PC-3 (cell line): ENCODE measurements at regions of chr15 and their contacts with region 1.

Region 1: DNA sequence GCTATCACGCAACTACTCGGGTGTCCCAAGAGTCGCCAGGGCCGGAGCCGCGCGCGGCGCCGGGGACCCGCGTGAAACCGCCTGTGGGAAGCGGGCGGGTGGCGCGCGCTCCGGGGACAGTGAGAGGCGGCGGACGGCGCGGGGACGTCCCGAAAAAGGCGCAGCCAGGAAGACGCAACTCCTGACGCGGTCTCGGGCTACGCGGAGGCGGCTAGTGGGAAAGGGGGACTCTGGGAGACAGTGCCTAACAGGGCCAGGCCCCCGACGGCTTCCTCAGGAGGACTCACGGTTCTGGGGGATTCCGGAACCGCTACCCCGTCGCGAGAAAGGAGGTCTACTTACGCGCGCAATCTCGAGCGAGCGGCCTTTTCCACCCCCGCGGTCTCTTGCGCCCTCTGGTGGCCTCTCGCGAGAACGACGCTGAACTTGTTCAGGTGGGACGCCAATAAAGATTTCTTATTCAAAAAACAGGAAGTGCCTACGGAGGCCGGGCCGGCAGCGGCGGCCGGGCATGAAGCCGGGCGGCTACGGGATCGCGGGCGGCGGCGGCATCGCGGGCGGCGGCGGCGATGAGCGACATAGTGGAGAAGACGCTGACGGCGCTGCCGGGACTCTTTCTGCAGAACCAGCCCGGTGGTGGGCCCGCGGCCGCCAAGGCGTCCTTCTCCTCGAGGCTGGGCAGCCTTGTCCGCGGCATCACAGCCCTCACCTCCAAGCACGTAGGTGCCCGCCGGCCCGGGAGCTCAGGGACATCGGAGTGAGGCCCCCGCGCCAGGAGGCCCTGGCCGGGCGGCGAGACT is at the start of gene AP4E1:
- DNase-seq: peak; percentile 88
- ATAC-seq: peak; percentile 60
- H3K4me3 ChIP-seq: peak within 1 kb of the TSS; percentile 94
- H3K27ac ChIP-seq: no peak within 1 kb of the TSS
- H3K4me1 ChIP-seq: peaks cover 7% of the 10 kb centered on the region; the same call in 1 of the 2 replicates
- H3K27me3 ChIP-seq: no peaks in the 10 kb centered on the region
- CTCF ChIP-seq: peak; percentile 80
- total RNA-seq, gene AP4E1: 4.7 and 6.0 TPM in 2 replicates

Region 2: DNA sequence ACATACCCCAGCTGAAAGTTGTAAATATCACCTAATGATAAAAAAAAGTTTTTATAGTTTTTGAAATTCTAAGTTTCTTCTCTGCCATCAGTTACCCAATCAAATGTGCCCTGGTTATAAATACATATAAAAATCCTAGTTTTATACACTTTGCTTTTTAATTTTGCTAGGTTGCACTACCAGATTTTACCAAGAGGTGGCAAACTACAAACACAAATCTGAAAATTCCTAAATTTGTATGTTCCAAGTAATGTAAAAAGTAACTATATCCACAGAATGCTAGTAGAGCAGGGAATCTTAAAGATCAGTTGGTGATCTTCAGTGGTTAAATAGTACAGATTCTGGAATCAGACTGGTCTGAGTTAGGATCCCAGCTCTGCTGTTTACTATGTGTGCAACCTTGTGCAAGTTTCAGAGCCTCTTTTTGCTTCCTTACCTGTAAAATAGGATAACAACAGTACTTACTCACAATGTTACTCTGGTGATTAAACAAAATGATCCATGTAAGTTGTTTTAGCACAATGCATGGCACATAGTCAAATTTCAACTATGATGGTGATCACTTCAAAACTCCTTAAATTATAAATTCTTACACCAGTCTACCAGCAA is 232.8 kb before region 1 on chr15:
- CTCF ChIA-PET with region 1: no interaction called
- POLR2A ChIA-PET with region 1: interaction called, 3 read pairs
- intact Hi-C with region 1: loop called (anchors 1 kb)
- DNase-seq: peak; percentile 65
- ATAC-seq: peak; percentile 43; the same call in 1 of the 2 replicates
- H3K4me3 ChIP-seq: no peak overlapping the region
- H3K27ac ChIP-seq: no peak overlapping the region
- H3K4me1 ChIP-seq: no peaks in the 10 kb centered on the region
- H3K27me3 ChIP-seq: no peaks in the 10 kb centered on the region
- CTCF ChIP-seq: peak; percentile 75

Region 3: DNA sequence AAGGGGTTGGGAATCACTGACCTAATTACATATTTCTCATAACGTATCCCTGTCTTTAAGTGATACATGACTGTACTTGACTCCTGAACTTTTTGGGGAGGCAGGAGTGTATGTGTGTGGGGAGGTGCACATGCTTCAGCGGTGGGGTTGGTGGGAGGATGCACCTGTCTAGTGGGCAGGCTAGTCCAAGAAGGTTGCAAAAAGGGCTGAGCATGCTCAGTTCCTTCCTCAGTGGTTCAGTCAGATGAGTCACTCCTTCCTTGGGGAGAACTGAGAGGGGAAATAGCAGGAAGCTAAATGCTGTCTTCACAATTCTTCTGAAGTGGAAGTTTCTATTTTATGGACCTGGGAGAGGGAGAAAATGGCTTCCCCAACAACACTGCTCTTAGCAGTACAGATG is 24.5 kb before region 1 on chr15:
- CTCF ChIA-PET with region 1: no interaction called
- POLR2A ChIA-PET with region 1: interaction called, 7 read pairs
- intact Hi-C with region 1: loop called (anchors 2 kb)
- DNase-seq: peak; percentile 61
- ATAC-seq: no peak
- H3K4me3 ChIP-seq: peak overlapping the region; percentile 51; the same call in 1 of the 2 replicates
- H3K27ac ChIP-seq: peak overlapping the region; percentile 99
- H3K4me1 ChIP-seq: peaks cover 31% of the 10 kb centered on the region
- H3K27me3 ChIP-seq: no peaks in the 10 kb centered on the region
- CTCF ChIP-seq: no peak

Region 4: GRCh38 chr15:50964075-50964474 is 55.7 kb after region 1 on chr15:
- CTCF ChIA-PET with region 1: no interaction called
- POLR2A ChIA-PET with region 1: no interaction called
- intact Hi-C with region 1: no loop called
- DNase-seq: no peak
- ATAC-seq: no peak
- H3K4me3 ChIP-seq: no peak overlapping the region
- H3K27ac ChIP-seq: no peak overlapping the region
- H3K4me1 ChIP-seq: no peaks in the 10 kb centered on the region; the same call in 1 of the 2 replicates
- H3K27me3 ChIP-seq: no peaks in the 10 kb centered on the region
- CTCF ChIP-seq: no peak

Region 5: DNA sequence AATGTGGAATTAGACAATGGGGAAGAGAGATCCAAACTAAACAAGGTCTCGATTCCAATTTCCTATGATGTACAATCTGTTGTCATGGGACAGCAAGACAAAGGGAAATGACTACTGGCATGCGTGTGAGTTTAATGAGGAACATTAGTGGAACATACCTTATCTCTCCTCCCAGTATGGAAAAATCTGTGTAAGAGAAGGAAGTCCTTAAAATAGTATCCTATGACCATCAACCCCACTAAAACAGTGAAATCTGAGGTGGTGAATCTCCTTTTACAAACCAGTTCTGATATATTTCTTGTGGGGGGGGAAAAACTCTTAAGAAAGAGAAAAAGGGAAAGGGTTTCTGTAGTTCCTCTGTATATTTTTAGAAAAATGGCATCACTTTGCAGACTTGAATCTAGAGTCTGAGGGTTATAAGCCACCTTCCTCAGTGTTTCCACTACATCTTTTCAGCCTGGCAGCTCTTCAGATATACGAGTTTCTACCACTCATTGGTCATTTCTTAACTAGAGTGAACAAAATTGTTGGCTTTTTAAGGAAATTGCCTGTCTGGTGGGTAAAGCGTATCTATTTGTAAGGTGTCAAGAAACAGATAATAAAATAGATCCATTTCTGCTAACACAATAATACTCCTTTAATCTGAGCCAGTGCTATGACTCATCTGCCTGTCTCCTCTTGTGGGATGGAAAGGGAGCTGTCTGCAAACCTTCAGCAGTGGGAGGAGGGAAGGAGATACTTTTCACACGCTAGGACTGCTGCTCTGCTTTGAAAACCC is 189.3 kb after region 1 on chr15:
- CTCF ChIA-PET with region 1: no interaction called
- POLR2A ChIA-PET with region 1: no interaction called
- intact Hi-C with region 1: no loop called
- DNase-seq: peak; percentile 27
- ATAC-seq: peak; percentile 81
- H3K4me3 ChIP-seq: no peak overlapping the region
- H3K27ac ChIP-seq: no peak overlapping the region
- H3K4me1 ChIP-seq: peaks cover 3% of the 10 kb centered on the region; the same call in 1 of the 2 replicates
- H3K27me3 ChIP-seq: peaks cover 21% of the 10 kb centered on the region
- CTCF ChIP-seq: no peak

Region 6: GRCh38 chr15:51132384-51133139 is 224.2 kb after region 1 on chr15:
- CTCF ChIA-PET with region 1: no interaction called
- POLR2A ChIA-PET with region 1: no interaction called
- intact Hi-C with region 1: no loop called
- DNase-seq: peak; percentile 43
- ATAC-seq: peak; percentile 56
- H3K4me3 ChIP-seq: no peak overlapping the region
- H3K27ac ChIP-seq: no peak overlapping the region
- H3K4me1 ChIP-seq: no peaks in the 10 kb centered on the region
- H3K27me3 ChIP-seq: no peaks in the 10 kb centered on the region
- CTCF ChIP-seq: peak; percentile 84